ENCODE measurements at regions of chr13 and their contacts with region 1.

Region 1: DNA sequence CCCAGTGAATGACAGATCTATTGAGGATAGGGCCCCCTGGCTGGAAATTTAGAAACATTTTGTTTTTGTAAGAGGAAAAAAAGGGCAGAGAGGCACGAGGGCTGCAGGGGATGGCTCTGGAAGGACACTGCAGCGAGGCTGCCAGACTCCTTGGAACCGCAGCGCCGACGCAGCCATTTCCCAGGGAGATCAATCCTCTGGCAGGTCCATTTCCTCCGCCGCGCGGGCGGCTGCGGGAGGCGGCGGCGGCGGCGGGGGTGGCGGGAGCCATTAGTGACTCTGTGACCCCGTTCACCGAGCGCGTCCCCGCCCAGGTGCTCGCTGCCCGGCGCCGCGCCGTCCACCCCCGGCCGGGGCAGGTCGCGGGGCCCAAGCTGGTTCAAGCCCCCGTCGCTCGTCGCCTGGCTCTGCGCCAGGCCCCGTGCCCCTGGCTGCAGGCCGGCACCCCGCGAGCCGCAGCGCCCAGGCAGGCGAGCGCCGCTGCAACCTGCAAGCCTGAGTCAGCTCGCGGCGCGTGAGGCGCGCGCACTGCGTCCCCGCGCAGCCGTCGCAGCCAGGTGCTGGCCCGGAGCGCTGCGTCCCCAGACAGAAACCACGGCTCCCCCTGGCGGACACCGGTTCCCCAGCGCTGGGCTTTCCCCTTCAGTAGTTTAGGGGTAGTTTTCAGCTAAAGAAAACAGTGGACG is 192.6 kb downstream of the KATNAL1 start:
- DNase-seq: peak; percentile 96 to 97
- H3K4me3 ChIP-seq: peak overlapping the region; percentile 53 to 67 (median 60)
- H3K27ac ChIP-seq: peak overlapping the region; percentile 86 to 95 (median 89)
- H3K4me1 ChIP-seq: peaks cover 28 to 47% (median 37%) of the 10 kb centered on the region in 4 donors
- H3K27me3 ChIP-seq: no peaks in the 10 kb centered on the region
- CTCF ChIP-seq: peak in 5 of 7 experiments; percentile 80 to 94 (median 92)
- EP300 ChIP-seq: no peak
- POLR2A ChIP-seq: no peak

Region 2: DNA sequence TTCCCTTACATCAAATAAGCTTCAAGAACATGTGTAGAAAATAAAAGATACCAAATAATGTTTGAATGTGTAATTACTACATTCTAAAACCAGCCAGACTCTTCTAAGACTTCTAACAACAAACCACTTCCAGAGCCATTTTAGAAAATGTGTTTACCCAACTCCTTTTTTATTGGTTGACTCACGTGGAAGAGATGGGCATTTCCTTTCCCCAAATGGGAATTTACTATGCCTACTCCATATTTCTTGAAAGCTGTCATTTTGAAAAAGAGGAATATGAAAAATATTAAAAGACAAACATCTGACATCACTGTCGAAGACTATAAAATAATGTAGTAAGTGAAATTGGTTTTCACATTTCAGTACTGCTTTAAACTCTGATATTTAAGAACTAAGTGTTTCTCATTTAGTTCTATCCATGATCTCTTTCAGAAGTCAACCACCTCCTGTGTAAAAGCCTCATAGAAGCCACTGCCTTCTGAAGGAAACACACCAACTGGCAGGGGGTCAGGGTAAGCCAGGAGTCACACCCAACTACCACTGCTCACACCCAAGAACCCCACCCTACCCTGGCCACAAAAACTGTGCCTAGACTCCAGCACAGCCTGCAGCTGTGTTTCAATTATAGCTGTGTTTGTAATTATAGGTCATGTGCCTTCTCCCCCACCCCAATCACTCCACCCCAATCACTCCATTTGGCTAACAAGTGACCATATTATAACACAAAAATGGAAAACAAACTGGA is 351.1 kb before region 1 on chr13:
- intact Hi-C with region 1: loop called (anchors 10 kb)
- DNase-seq: no peak
- H3K4me3 ChIP-seq: no peak overlapping the region
- H3K27ac ChIP-seq: no peak overlapping the region
- H3K4me1 ChIP-seq: peaks cover 0 to 12% (median 5%) of the 10 kb centered on the region in 4 donors
- H3K27me3 ChIP-seq: no peaks in the 10 kb centered on the region
- CTCF ChIP-seq: no peak
- EP300 ChIP-seq: no peak
- POLR2A ChIP-seq: no peak

Region 3: GRCh38 chr13:29835280-29836061 is 279.2 kb before region 1 on chr13:
- intact Hi-C with region 1: loop called (anchors 10 kb)
- DNase-seq: no peak
- H3K4me3 ChIP-seq: no peak overlapping the region
- H3K27ac ChIP-seq: no peak overlapping the region
- H3K4me1 ChIP-seq: peaks cover 3 to 77% (median 40%) of the 10 kb centered on the region in 4 donors
- H3K27me3 ChIP-seq: no peaks in the 10 kb centered on the region
- CTCF ChIP-seq: no peak
- EP300 ChIP-seq: no peak
- POLR2A ChIP-seq: no peak